Vagina (tissue), 2 donors: ENCODE measurements at regions of chr16 and their contacts with region 1.

Region 1: DNA sequence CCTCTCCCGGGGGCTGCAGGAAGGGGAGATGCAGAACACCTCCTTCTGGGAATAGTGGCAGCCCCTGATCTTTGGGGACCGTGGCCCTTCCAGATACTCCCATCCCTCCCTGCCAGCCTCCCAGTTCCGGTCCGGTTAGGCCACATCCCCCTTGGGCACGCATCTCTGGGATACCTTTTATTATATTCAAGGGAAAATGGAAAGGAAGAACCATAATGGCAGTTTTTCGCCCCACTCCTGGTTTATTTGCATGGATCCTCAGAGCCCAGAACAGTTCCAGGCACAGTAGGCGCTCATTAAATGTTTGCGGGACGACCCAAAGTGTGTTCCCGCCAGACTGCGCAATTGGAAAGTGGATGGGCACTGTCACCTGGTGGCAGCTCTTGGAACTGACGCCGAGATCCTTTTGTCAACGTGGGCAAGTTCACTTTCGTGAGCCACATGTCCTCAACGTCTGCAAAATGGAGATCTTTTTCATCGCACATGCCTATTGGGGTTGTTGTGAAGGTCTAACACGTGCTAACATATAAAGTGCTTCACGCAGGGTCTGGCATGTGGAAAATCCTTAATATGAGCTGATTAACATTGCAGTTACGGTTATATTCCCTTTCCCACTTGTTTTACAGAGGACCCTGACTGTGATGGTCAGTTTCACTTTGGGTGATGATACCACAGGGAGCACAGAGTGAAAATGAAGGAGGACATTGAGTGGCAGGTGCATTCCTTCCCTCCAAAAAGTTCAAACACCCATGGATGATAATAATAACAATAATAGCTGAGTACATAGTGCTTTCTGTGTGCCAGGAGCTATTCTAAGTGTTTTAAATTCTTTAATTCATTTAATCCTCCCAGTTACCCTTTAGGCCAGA is 1.7 kb upstream of the GPRC5B start:
- DNase-seq: no peak
- H3K4me3 ChIP-seq: peak overlapping the region; percentile 74 to 75
- H3K27ac ChIP-seq: no peak overlapping the region
- H3K4me1 ChIP-seq: peaks cover 40% of the 10 kb centered on the region
- H3K27me3 ChIP-seq: no peaks in the 10 kb centered on the region
- CTCF ChIP-seq: peak; percentile 95 to 99 (median 99)
- POLR2A ChIP-seq: no peak

Region 2: GRCh38 chr16:19542138-19542821 is 344.0 kb before region 1 on chr16:
- intact Hi-C with region 1: no loop called
- DNase-seq: no peak
- H3K4me3 ChIP-seq: no peak overlapping the region
- H3K27ac ChIP-seq: no peak overlapping the region
- H3K4me1 ChIP-seq: no peaks in the 10 kb centered on the region
- H3K27me3 ChIP-seq: no peaks in the 10 kb centered on the region
- CTCF ChIP-seq: no peak
- POLR2A ChIP-seq: no peak

Region 3: DNA sequence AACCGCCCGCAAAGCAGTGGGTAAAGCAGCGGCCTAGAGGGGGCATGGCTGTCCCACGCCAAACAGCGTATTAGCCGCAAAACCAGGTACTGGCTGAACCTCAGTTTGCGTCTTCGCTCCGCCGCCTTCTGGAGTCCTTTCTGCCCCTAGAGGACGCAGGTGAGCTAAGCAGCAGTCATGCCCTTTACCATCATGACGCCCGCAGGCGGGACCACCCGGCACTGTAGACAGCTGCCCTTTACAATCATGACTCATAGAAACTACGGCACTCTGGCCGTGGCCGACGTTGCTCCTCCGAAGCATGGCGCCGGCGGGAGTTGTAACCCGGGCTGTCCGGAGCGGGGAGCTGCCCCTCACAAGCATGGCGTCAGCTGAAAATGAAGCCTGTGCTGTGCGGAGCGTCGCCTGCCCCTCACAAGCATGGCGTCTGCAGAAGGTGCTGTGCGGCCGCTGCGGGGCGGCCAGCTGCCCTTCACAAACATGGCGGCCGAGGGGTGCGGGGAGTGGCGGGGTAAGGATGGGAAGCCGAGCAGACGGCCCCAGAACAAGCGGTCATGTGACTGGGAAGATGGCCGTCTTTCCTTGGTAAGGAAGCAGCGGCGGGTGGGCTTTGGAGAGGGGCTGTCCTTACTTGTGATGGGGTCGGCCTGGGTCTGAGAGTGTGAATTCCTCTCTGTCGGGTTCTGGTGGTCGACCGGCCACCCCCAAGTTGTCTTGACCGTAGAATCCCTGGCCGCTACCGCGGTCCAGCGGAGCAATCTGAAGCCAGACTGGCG is 331.0 kb before region 1 on chr16 and contains the start of gene VPS35L:
- intact Hi-C with region 1: loop called (anchors 5 kb)
- DNase-seq: peak in 1 of 2 donors; percentile 98
- H3K4me3 ChIP-seq: peak within 1 kb of the TSS; percentile 52 to 73
- H3K27ac ChIP-seq: peak within 1 kb of the TSS; percentile 84
- H3K4me1 ChIP-seq: peaks cover 19% of the 10 kb centered on the region
- H3K27me3 ChIP-seq: no peaks in the 10 kb centered on the region
- CTCF ChIP-seq: peak; percentile 54 to 86 (median 72)
- POLR2A ChIP-seq: no peak
- total RNA-seq, gene VPS35L: 39.8 TPM

Region 4: DNA sequence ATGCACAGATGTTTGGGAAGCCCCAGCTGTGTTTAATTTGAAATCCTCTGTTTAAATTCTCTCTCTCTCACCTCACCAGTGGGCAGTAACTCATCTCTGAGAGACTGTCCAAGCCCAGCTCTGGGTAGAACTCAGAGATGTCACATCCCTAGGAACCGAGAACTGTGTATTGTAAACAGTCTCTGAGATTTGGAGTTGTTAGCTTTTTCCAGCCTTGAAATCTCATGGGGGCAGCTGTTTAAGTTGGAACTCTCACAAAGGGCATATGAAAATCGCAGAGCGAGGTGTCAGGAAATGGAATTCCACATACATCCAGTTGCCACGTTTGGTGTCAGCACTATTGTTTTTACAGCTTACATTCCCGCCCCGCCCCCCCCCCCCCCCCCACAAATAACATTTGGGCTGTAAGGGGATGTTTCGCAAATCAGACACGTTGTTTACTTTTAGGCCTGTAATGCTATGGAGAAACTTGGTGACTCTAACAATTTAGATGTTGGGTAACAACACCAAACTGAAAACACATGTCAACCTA is 296.5 kb before region 1 on chr16:
- intact Hi-C with region 1: no loop called
- DNase-seq: no peak
- H3K4me3 ChIP-seq: no peak overlapping the region
- H3K27ac ChIP-seq: peak overlapping the region; percentile 77
- H3K4me1 ChIP-seq: peaks cover 20% of the 10 kb centered on the region
- H3K27me3 ChIP-seq: no peaks in the 10 kb centered on the region
- CTCF ChIP-seq: no peak
- POLR2A ChIP-seq: no peak

Region 5: DNA sequence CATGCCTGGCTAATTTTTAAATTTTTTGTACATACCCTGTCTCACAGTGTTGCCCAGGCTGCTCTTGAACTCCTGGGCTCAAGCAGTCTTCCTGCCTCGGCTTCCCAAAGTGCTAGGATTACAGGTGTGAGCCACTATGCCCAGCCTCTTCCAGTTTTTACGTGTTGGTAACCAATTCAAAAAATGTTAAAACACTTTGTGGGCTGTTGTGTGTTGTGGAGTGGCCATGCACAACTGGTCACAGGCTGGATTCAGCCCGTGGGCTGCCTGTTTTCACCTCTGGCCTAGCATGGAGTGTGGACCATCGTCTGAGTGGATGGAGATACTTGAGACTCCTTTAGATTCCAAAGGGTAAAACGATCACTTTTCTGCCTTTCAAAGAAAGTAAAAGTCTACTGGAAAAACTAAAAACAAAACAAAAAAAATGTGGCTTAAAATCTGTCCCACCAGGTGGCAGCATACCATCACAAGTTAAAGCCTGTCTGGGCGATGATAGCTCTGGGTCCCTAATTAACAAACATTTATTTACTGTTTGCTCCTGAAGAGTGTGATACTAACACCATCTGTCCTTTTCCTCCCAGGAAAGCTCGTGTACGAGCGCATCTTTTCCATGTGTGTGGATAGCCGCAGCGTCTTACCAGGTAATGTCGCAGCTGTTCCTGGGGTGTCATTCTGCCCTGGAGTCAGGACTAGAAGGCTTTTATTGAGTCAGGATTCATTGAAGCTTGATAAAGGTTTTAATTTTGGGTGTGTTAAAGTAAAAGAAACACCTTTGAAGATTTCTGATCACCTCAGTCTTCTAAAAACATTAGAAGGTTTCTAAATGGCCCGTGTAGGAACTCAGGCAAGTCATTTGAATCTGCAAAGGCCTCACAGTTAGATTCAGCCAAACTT is 285.0 kb before region 1 on chr16:
- intact Hi-C with region 1: loop called (anchors 2 kb)
- DNase-seq: no peak
- H3K4me3 ChIP-seq: no peak overlapping the region
- H3K27ac ChIP-seq: peak overlapping the region; percentile 12
- H3K4me1 ChIP-seq: peaks cover 13% of the 10 kb centered on the region
- H3K27me3 ChIP-seq: no peaks in the 10 kb centered on the region
- CTCF ChIP-seq: peak; percentile 28 to 57 (median 37)
- POLR2A ChIP-seq: no peak

Region 6: GRCh38 chr16:19696328-19696727 is 190.0 kb before region 1 on chr16:
- intact Hi-C with region 1: loop called (anchors 5 kb)
- DNase-seq: no peak
- H3K4me3 ChIP-seq: no peak overlapping the region
- H3K27ac ChIP-seq: peak overlapping the region; percentile 89
- H3K4me1 ChIP-seq: peaks cover 59% of the 10 kb centered on the region
- H3K27me3 ChIP-seq: no peaks in the 10 kb centered on the region
- CTCF ChIP-seq: no peak
- POLR2A ChIP-seq: no peak

Region 7: GRCh38 chr16:19717771-19718602 is 168.3 kb before region 1 on chr16 and contains the starts of genes IQCK and KNOP1:
- intact Hi-C with region 1: loop called (anchors 5 kb)
- DNase-seq: no peak
- H3K4me3 ChIP-seq: peak within 1 kb of the TSS; percentile 85 to 99
- H3K27ac ChIP-seq: peak within 1 kb of the TSS; percentile 77
- H3K4me1 ChIP-seq: peaks cover 27% of the 10 kb centered on the region
- H3K27me3 ChIP-seq: no peaks in the 10 kb centered on the region
- CTCF ChIP-seq: peak in 1 of 3 experiments; percentile 4
- POLR2A ChIP-seq: peak in 1 of 2 donors; percentile 36
- total RNA-seq, gene IQCK: 19.2 TPM
- total RNA-seq, gene KNOP1: 7.9 TPM

Region 8: DNA sequence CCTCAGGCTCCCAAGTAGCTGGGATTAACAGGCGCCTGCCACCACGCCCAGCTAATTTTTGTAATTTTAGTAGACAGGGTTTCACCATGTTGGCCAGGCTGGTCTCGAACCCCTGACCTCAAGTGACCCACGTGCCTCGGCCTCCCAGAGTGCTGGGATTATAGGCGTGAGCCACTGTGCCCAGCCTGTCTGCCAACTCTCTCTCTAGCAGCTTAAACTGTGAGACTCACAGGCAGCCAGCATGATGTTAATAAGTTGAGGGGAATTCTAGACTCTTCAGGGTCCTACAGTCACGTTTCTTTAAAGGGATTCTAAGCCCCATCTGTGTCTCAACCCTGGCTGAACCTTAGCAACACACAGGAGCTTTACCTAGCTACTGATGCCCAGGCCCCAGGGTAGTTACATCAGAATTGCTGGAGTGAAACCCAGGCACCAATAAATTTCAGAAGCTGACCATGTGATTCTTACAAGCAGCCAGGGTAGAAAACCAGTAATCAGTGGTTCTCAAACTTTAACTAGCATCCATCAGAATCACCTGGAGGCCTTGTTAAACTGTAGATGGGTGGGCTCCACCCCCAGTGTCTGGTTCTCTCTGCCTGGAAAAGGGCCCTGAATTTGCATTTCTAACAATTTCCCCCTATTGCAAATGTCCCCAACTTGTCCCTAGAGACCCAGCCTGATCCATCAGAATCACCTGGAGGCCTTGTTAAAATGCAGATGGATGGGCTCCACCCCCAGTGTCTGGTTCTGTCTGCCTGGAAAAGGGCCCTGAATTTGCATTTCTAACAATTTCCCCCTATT is 32.4 kb before region 1 on chr16:
- intact Hi-C with region 1: no loop called
- DNase-seq: no peak
- H3K4me3 ChIP-seq: no peak overlapping the region
- H3K27ac ChIP-seq: no peak overlapping the region
- H3K4me1 ChIP-seq: no peaks in the 10 kb centered on the region
- H3K27me3 ChIP-seq: no peaks in the 10 kb centered on the region
- CTCF ChIP-seq: no peak
- POLR2A ChIP-seq: no peak

Region 9: DNA sequence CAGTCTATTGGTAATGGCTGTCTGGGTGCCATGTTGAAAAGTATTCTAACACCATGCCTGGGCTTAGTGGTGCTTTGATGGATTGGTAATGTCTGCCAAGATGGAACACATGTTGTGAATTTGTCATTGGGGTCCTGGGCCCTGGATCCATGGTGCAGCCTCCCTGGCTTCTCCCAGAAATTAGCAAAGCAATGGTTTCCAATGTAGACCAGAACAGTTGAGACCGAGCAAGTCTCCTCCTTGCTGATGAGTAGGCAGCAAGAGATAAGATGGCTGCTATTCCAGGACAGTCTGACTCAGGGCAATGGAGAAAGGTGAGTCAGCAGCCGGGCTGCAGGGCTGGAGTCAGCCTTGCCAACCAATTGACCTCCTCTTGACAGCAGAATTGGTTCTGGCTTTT is 156.5 kb after region 1 on chr16:
- intact Hi-C with region 1: no loop called
- DNase-seq: no peak
- H3K4me3 ChIP-seq: no peak overlapping the region
- H3K27ac ChIP-seq: no peak overlapping the region
- H3K4me1 ChIP-seq: no peaks in the 10 kb centered on the region
- H3K27me3 ChIP-seq: no peaks in the 10 kb centered on the region
- CTCF ChIP-seq: no peak
- POLR2A ChIP-seq: no peak